ENCODE measurements at regions of chr16 and their contacts with region 1.

Region 1: GRCh38 chr16:27426423-27427408 is 24.7 kb downstream of the IL21R start:
- DNase-seq: peak; percentile 91
- H3K4me3 Mint-ChIP-seq: peak overlapping the region; percentile 45
- H3K27ac Mint-ChIP-seq: peak overlapping the region; percentile 87
- H3K4me1 Mint-ChIP-seq: peaks cover 76% of the 10 kb centered on the region
- H3K27me3 Mint-ChIP-seq: no peaks in the 10 kb centered on the region

Region 2: DNA sequence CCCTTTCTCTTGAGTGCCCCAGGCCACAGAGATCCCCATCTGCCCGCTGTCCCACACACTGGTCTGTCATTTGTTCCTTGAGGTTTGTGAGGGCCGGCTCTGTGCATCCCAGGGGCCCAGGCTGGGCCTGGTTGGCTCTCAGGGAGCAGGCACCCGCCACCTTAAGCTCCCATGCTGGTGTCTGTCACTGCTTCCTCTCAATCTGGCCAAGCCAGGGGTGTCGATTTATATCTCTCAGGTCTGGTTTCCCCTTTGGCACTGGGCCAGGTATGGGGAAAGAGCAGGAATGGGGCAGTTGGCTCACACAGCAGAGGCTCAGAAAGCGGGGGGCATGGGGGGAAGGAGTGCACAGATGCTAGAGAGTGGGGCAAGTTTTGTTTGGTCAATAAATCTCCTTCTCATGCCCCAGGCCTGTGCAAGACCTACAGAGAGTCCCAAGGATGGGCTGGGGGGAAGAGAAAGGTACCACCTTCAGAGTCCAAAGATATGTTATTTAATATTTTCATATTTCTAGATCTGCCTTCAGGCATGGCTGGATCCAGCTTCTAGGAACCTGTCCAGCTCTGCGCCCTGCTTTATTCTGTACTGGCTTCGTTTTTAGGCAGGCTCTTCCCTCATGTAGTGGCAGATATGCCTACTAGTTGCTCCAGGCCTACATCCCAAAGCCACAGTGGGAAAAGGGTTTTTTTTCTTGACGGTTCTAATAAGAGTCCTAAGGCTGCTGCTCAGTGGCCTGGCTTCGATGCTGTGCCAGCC is 78.6 kb before region 1 on chr16:
- CTCF ChIA-PET with region 1: no interaction called
- POLR2A ChIA-PET with region 1: no interaction called
- intact Hi-C with region 1: no loop called
- DNase-seq: no peak
- H3K4me3 Mint-ChIP-seq: no peak overlapping the region
- H3K27ac Mint-ChIP-seq: peak overlapping the region; percentile 20
- H3K4me1 Mint-ChIP-seq: peaks cover 3% of the 10 kb centered on the region
- H3K27me3 Mint-ChIP-seq: no peaks in the 10 kb centered on the region

Region 3: GRCh38 chr16:27449434-27450195 is 22.9 kb after region 1 on chr16:
- CTCF ChIA-PET with region 1: no interaction called
- POLR2A ChIA-PET with region 1: interaction called, 3 read pairs
- intact Hi-C with region 1: loop called (anchors 2 kb)
- DNase-seq: peak; percentile 89
- H3K4me3 Mint-ChIP-seq: peak overlapping the region; percentile 48
- H3K27ac Mint-ChIP-seq: peak overlapping the region; percentile 78
- H3K4me1 Mint-ChIP-seq: peaks cover 82% of the 10 kb centered on the region
- H3K27me3 Mint-ChIP-seq: no peaks in the 10 kb centered on the region

Region 4: GRCh38 chr16:27461483-27462171 is 34.9 kb after region 1 on chr16:
- CTCF ChIA-PET with region 1: no interaction called
- POLR2A ChIA-PET with region 1: no interaction called
- intact Hi-C with region 1: no loop called
- DNase-seq: no peak
- H3K4me3 Mint-ChIP-seq: no peak overlapping the region
- H3K27ac Mint-ChIP-seq: no peak overlapping the region
- H3K4me1 Mint-ChIP-seq: peaks cover 41% of the 10 kb centered on the region
- H3K27me3 Mint-ChIP-seq: no peaks in the 10 kb centered on the region